Gastrocnemius medialis (tissue), 4 donors: ENCODE measurements at regions of chr4 and their contacts with region 1.

Region 1: DNA sequence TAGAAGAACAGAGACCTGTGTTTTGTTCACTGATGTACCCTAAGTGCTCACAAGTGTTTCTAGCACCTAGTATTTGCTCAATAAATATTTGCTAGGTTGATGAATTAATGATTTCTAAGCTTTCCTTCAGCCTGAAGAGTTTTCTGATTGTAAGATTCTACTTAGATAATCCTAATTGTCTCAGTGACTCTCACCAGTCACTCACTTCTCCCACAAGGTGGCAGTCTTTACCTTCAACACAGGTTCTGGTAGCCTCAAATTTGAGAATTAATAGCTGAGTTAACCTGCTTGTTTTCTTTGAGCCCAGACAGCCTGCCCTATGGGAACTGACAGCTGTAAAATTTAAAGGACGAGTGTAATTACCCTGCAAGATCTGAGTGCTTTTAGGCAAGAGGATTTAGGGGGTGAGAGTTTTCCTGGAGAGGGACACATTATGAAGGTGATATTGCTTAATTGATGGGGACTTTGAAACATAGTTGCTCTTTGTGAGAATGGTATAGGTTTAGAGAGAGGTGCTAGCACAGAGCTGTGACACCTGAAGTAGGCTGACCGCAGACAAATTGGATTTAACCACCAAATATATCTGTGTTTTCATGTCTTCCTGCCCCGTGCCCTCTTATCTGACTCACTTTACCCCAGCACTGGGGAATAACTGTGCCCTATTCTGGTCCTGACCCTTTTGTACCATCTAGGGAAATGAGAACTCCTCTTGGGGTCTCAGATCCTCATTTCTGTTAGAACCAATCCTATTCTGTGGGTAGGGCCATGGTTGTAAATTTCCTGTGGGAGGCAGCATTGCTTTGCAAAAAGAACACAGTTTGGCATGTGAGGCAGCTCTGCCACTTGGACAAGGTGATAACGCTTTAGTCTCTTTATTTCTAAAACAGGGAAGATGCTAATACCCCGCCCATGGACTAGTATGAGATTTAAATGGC is 27.7 kb downstream of the CD38 start:
- DNase-seq: peak; percentile 18 to 45
- ATAC-seq: peak; percentile 75 to 77
- H3K4me3 ChIP-seq: peak overlapping the region in 2 of 4 donors; percentile 12 to 22
- H3K27ac ChIP-seq: peak overlapping the region; percentile 12 to 86 (median 83)
- H3K4me1 ChIP-seq: peaks cover 38 to 74% of the 10 kb centered on the region in 2 donors
- H3K27me3 ChIP-seq: no peaks in the 10 kb centered on the region
- CTCF ChIP-seq: peak; percentile 66 to 82 (median 74)
- POLR2A ChIP-seq: no peak

Region 2: DNA sequence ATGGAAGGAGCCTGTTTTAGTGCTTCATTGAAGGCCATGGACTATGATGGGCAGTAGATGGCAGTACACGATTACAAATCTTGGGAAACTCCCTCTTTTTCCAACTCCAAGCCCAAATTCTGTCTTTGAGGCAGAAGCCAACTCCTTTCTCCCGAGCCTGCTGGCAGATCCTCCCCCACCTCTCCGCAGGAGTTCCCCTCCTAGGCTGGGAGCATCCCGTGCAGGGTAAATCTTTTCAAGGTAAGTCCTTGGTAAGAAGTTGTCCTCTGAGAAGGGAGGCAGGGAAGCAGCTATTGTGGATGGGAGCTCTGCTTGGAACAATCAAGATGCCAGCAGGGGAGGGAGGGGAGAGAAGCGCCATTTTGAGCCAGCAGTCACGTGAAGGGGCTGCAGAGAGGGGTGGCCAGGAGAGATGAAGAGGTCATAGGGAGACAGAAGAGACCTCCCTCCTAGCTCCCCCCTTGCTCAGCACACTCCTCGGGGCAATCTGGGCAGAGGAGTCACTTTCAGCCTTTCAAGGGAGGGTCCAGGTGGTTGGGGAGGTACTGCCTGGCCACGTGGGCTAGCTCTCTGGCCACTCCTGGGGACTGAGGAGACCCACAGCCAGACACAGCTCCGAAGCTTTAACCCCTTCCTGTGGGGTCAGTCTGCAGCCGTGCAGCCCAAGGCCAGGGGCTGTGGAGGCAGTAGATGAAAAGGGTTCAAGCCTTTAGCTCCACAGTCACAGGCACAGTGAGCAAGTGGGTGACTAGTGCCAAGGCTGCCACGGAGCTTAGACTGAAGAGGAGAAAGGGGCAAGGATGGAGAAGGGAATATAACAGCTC is 326.5 kb before region 1 on chr4:
- in situ Hi-C with region 1: no loop called
- intact Hi-C with region 1: loop called (anchors 10 kb)
- DNase-seq: peak in 1 of 2 donors; percentile 31
- ATAC-seq: peak; percentile 93 to 95
- H3K4me3 ChIP-seq: peak overlapping the region; percentile 27 to 56 (median 45)
- H3K27ac ChIP-seq: peak overlapping the region in 3 of 4 donors; percentile 12 to 63 (median 57)
- H3K4me1 ChIP-seq: no peaks in the 10 kb centered on the region
- H3K27me3 ChIP-seq: no peaks in the 10 kb centered on the region
- CTCF ChIP-seq: peak; percentile 49 to 69 (median 60)
- POLR2A ChIP-seq: no peak

Region 3: DNA sequence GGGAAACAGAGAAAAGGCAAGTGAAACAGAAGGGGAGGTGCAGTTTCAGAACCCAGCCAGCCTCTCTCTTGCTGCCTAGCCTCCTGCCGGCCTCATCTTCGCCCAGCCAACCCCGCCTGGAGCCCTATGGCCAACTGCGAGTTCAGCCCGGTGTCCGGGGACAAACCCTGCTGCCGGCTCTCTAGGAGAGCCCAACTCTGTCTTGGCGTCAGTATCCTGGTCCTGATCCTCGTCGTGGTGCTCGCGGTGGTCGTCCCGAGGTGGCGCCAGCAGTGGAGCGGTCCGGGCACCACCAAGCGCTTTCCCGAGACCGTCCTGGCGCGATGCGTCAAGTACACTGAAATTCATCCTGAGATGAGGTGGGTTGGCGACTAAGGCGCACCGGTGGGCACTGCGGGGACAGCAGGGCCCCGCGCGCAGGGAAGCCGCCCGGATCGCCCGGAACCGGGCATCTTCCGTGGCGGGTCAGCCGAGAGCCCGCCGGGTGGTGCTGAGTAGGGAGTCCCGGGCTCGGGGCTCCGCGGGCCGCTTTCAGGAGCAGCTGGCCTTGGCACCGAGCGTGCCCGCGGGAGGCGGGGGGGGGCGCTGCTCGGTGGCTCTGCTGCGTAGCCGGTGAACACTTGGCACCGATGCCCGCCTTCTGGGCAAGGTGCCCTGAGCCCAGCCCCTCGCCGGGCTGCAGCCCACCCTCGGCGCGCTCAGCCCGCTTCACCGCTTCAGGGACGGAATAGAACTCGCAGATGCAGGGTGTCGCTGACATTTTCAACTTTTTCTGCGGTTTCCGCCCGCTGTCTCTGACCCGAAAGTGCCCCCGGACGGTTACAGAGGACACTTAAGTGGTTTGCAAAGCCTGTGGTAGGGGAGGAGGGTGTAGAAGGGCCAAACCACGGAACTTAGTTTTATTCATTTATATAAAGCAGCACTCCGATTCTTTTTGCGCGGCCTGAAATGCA is 27.3 kb before region 1 on chr4 and contains the start of gene CD38:
- in situ Hi-C with region 1: no loop called
- intact Hi-C with region 1: loop called (anchors 1 kb)
- DNase-seq: peak; percentile 46 to 64
- ATAC-seq: peak; percentile 76 to 86
- H3K4me3 ChIP-seq: peak within 1 kb of the TSS; percentile 71 to 86 (median 78)
- H3K27ac ChIP-seq: peak within 1 kb of the TSS; percentile 89 to 91 (median 90)
- H3K4me1 ChIP-seq: peaks cover 6 to 27% of the 10 kb centered on the region in 2 donors
- H3K27me3 ChIP-seq: no peaks in the 10 kb centered on the region
- CTCF ChIP-seq: no peak
- POLR2A ChIP-seq: peak in 1 of 2 donors; percentile 6
- total RNA-seq, gene CD38: 0.73 to 9.0 (median 2.4) TPM

Region 4: GRCh38 chr4:15913631-15913970 is 107.8 kb after region 1 on chr4:
- in situ Hi-C with region 1: no loop called
- intact Hi-C with region 1: no loop called
- DNase-seq: no peak
- ATAC-seq: no peak
- H3K4me3 ChIP-seq: no peak overlapping the region
- H3K27ac ChIP-seq: no peak overlapping the region
- H3K4me1 ChIP-seq: no peaks in the 10 kb centered on the region
- H3K27me3 ChIP-seq: no peaks in the 10 kb centered on the region
- CTCF ChIP-seq: no peak
- POLR2A ChIP-seq: no peak

Region 5: GRCh38 chr4:15956179-15956850 is 150.5 kb after region 1 on chr4:
- in situ Hi-C with region 1: loop called in 3 of 4 experiments (anchors 5 to 10 kb)
- intact Hi-C with region 1: loop called (anchors 1 kb)
- DNase-seq: peak; percentile 59 to 75
- ATAC-seq: peak; percentile 91 to 96
- H3K4me3 ChIP-seq: no peak overlapping the region
- H3K27ac ChIP-seq: no peak overlapping the region
- H3K4me1 ChIP-seq: peaks cover 0 to 3% of the 10 kb centered on the region in 2 donors
- H3K27me3 ChIP-seq: no peaks in the 10 kb centered on the region
- CTCF ChIP-seq: peak; percentile 80 to 95 (median 87)
- POLR2A ChIP-seq: no peak

Region 6: DNA sequence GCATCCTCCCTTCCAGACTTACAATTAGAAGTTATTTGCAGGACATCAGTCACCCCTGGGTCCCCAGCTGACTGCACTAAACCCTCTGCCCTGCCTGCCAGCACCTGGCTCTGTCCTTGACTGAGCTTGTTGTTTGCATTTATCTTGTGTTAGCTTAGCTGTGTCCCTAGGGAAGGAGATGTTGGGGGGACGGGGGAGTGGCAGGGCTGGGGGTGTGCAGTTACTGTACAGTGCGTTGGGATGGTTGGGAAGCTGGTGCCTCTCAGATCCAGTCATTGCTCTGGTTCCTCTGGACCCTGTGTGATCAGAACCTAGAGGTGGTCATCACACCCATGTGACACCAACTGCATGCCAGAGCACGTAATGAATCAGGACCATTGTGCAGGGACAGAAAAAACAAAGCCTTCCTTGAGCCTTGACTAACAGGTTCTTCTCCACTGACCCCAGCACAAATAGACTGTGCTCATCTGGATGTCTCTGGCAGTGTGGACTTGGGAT is 310.7 kb after region 1 on chr4:
- in situ Hi-C with region 1: no loop called
- intact Hi-C with region 1: loop called (anchors 10 kb)
- DNase-seq: peak in 1 of 2 donors; percentile 22
- ATAC-seq: peak in 1 of 2 donors; percentile 8
- H3K4me3 ChIP-seq: no peak overlapping the region
- H3K27ac ChIP-seq: peak overlapping the region; percentile 52 to 77 (median 66)
- H3K4me1 ChIP-seq: peaks cover 53% of the 10 kb centered on the region in 2 donors
- H3K27me3 ChIP-seq: no peaks in the 10 kb centered on the region
- CTCF ChIP-seq: no peak
- POLR2A ChIP-seq: no peak